Activated CD8-positive, alpha-beta T cell treated with anti-CD3 and anti-CD28 coated beads, Interleukin-2, amount 10 ng/mL, durations not matched to agents 7 days and 5 days (primary cell): ENCODE measurements at regions of chr7 and their contacts with region 1.

Region 1: GRCh38 chr7:128455551-128456254 is at the start of gene HILPDA:
- DNase-seq: peak; percentile 95
- ATAC-seq: peak; percentile 91
- H3K4me3 Mint-ChIP-seq: peak within 1 kb of the TSS; percentile 89
- H3K27ac Mint-ChIP-seq: peak within 1 kb of the TSS; percentile 93
- H3K4me1 Mint-ChIP-seq: peaks cover 55% of the 10 kb centered on the region
- H3K27me3 Mint-ChIP-seq: peaks cover 7% of the 10 kb centered on the region
- total RNA-seq, gene HILPDA: 24.1 to 26.2 TPM

Region 2: DNA sequence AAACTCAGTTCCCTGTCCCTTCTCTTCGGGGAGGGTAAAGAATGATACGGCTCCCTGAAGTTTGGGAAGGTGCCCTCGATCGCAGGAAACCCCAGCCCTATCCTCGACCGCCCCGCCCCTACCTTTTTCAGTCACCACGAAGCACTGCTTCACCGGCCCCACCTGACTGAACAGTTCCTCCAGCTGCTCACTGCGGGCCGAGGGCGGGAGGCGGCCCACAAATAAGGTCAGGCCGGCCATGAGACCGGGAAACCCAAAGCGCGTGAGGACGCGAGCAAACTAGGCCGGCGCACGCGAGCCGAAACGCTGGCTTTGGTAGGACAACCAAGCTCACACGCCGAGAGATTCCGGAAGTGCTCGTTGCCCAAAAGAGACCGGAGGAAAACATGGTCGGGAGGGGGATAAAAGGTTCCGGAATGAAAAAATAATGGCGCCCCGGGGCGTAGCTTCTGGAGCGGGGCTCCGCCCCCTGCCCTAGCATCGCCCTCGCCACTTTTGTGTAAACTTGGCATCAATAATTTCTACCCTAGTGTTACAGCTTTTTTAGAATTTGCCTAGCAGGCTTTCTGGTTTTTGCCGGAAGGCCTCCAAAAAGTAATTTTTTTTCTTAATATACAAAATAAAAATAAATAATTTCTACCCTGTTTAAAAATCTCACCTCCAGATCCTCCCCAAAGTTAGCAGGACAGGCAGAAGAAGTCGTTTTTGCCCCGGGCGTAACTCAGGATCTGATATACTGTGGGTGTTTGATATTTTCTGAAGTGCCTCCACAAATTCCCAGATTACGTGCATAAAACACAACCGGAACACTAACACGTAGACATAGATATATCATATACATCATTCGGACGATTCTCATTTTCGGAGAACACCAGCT is 111.9 kb before region 1 on chr7 and contains the start of gene RBM28:
- CTCF ChIA-PET with region 1: interaction called, 15 read pairs
- POLR2A ChIA-PET with region 1: interaction called, 3 read pairs
- DNase-seq: peak; percentile 90
- ATAC-seq: peak; percentile 98
- H3K4me3 Mint-ChIP-seq: peak within 1 kb of the TSS; percentile 91
- H3K27ac Mint-ChIP-seq: peak within 1 kb of the TSS; percentile 93
- H3K4me1 Mint-ChIP-seq: peaks cover 23% of the 10 kb centered on the region
- H3K27me3 Mint-ChIP-seq: peaks cover 12% of the 10 kb centered on the region
- total RNA-seq, gene RBM28: 40.4 to 43.3 TPM

Region 3: DNA sequence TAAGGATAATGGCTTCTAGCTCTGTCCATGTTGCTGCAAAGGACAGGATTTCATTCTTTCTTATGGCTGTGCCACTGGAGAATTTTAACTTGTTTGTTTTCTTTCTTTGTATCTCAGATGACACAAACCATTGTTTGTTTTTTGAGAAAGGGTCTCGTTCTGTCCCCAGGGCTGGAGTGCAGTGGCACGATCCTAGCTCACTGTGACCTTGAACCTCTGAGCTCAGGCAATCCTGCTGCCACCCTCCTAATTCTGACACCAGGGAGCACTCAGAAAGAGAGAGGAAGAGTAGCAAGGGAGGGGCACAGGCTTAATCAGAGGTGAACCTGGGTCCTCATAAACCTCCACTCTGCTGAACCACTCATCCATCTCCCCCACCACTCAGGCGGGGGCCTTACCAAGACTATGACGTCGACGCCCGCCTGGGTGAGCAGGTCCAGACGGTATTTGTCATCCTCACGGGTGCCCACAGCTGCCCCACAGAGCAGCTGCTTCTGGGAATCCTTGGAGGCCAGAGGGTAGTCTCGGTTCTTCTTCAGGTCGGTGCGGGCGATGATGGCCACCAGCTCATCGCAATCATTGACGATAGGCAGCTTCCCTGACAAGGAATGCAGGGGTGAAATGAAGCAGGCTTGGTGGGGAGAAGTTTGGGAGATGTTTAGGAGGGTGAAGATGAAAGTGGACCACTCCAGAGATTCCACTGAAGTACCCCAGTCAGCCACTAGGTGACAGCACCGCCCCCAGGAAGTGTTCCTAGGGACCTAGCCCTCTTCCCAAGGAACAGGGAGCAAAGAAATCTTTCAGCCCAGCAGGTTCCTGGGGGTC is 57.5 kb before region 1 on chr7:
- CTCF ChIA-PET with region 1: interaction called, 12 read pairs
- POLR2A ChIA-PET with region 1: no interaction called
- DNase-seq: peak; percentile 46
- ATAC-seq: peak; percentile 35
- H3K4me3 Mint-ChIP-seq: no peak overlapping the region
- H3K27ac Mint-ChIP-seq: peak overlapping the region; percentile 28
- H3K4me1 Mint-ChIP-seq: peaks cover 8% of the 10 kb centered on the region
- H3K27me3 Mint-ChIP-seq: no peaks in the 10 kb centered on the region

Region 4: DNA sequence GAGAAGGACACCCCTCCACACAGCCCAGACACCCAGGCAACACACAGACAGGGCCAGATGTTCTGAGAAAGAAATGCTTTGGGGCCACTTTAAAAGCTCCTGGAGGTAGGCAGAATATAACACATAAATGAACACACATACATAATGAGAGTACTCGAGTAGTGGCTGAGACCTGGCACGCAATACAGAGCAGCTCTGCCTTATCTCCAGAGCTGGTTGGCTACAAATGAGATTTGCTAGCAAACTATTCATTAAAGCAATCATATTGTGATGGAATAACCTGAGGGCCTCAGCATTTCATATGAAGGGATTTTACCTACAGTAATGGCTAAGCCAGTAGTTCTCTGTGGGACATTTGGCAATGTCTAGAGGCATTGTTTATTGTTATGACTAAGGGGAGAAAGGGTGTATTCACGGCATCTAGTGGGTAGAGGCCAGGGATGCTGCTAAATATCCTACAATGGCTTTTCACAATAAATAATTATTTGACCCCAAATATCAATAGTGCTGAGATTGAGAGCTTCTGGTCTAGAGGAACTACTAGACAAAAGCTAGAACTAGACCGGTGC is 40.4 kb before region 1 on chr7:
- CTCF ChIA-PET with region 1: interaction called, 31 read pairs
- POLR2A ChIA-PET with region 1: interaction called, 4 read pairs
- DNase-seq: no peak
- ATAC-seq: no peak
- H3K4me3 Mint-ChIP-seq: no peak overlapping the region
- H3K27ac Mint-ChIP-seq: no peak overlapping the region
- H3K4me1 Mint-ChIP-seq: peaks cover 3% of the 10 kb centered on the region
- H3K27me3 Mint-ChIP-seq: peaks cover 28% of the 10 kb centered on the region

Region 5: GRCh38 chr7:128431221-128431620 is 24.5 kb before region 1 on chr7:
- CTCF ChIA-PET with region 1: interaction called, 350 read pairs
- POLR2A ChIA-PET with region 1: interaction called, 8 read pairs
- DNase-seq: no peak
- ATAC-seq: no peak
- H3K4me3 Mint-ChIP-seq: no peak overlapping the region
- H3K27ac Mint-ChIP-seq: no peak overlapping the region
- H3K4me1 Mint-ChIP-seq: peaks cover 12% of the 10 kb centered on the region
- H3K27me3 Mint-ChIP-seq: peaks cover 14% of the 10 kb centered on the region